ENCODE measurements at regions of chr15 and their contacts with region 1.

Region 1: DNA sequence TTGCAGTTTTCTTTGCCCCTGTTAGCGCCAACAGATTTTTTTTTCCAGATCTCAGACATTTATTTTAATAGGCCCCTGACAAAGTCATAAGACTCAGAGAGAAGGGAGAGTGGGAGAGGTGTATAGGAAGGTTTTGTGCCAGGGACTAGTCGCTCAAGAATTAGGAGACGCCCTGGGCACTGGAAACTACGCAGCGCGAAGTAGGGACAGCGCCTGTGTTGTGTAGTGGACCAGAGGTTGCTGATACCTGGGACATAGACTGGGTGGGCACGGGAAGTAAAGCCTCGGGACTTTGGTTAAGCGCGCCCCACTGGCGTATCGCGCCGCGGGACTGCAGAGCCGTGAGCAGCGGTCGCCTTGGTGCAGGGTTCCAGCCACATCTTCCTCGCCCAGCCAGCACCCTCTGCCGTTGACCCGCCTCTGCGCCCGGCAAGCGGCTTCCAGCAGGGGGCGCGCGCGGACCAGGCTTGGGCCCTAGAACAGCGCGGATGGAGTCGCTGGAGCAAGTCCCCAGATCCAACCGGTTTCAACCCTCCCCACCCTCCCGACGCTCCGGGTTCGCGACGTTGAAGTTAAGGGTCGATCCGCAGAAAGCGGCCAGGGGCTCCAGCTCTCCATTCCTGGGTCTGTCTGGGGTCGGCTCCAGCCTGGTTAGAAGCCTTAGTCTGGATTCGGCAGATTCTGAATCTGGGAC is 3.0 kb upstream of the ISLR2 start:
- DNase-seq: peak; percentile 83
- ATAC-seq: peak; percentile 79
- H3K4me3 Mint-ChIP-seq: peak overlapping the region; percentile 61
- H3K27ac Mint-ChIP-seq: no peak overlapping the region
- H3K4me1 Mint-ChIP-seq: peaks cover 68% of the 10 kb centered on the region
- H3K27me3 Mint-ChIP-seq: peaks cover 41% of the 10 kb centered on the region
- CTCF ChIP-seq: peak; percentile 71

Region 2: GRCh38 chr15:74302821-74303359 is 175.5 kb after region 1 on chr15:
- CTCF ChIA-PET with region 1: interaction called, 5 read pairs
- POLR2A ChIA-PET with region 1: interaction called, 8 read pairs
- intact Hi-C with region 1: loop called (anchors 1 kb)
- DNase-seq: peak; percentile 37
- ATAC-seq: peak; percentile 31
- H3K4me3 Mint-ChIP-seq: no peak overlapping the region
- H3K27ac Mint-ChIP-seq: no peak overlapping the region
- H3K4me1 Mint-ChIP-seq: no peaks in the 10 kb centered on the region
- H3K27me3 Mint-ChIP-seq: peaks cover 49% of the 10 kb centered on the region
- CTCF ChIP-seq: no peak

Region 3: DNA sequence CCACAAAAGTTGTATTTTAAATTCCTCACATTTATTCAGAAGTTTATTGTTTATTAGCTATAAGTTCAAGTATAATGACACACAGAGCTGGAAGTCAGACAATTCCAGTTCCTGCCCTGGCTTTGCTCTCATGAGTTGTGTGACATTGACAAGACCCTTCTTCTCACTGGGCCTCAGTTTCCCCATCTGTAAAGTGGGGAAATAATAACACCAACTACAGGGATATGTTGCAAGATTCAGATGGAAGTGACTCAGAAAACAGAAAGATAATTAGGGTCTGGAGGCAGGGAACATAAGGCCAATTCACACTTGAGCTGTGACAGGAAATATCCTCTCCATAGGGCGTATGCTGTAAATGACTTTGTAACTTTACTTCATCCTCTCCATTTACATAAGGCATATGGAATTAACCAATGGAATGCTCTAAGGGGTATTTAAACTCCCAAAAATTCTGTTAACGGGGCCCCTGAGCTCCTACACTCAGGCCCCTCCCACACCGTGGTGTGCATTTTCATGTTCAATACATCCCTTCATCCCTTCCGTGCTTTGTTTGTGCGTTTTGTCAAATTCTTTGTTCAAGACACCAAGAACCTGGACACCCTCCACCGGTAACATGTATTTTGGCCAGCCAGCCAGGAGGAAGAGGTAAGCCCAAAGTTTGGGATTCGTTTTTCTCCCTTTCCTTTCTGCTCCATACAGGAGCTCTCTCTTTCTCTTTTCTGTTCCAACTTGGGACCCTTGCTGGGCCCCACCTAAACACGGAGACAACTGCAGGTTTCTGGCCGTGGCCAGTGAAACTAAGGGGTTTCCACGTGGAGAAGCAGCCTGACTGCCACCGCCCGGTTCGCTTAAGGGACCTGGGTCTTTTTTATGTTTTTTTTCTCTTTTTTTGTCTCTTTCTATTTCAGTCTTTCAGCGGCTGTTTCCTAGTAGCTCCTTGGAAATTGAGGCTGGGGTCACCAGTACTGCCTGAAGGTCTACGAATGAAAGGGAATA is 223.2 kb after region 1 on chr15:
- CTCF ChIA-PET with region 1: no interaction called
- POLR2A ChIA-PET with region 1: no interaction called
- intact Hi-C with region 1: no loop called
- DNase-seq: no peak
- ATAC-seq: no peak
- H3K4me3 Mint-ChIP-seq: no peak overlapping the region
- H3K27ac Mint-ChIP-seq: no peak overlapping the region
- H3K4me1 Mint-ChIP-seq: no peaks in the 10 kb centered on the region
- H3K27me3 Mint-ChIP-seq: peaks cover 21% of the 10 kb centered on the region
- CTCF ChIP-seq: no peak

Measured in activated B cell treated with CpG ODN at 0.5 μM for 24 hours (primary cell).